ENCODE measurements at regions of chr15 and their contacts with region 1.

Region 1: DNA sequence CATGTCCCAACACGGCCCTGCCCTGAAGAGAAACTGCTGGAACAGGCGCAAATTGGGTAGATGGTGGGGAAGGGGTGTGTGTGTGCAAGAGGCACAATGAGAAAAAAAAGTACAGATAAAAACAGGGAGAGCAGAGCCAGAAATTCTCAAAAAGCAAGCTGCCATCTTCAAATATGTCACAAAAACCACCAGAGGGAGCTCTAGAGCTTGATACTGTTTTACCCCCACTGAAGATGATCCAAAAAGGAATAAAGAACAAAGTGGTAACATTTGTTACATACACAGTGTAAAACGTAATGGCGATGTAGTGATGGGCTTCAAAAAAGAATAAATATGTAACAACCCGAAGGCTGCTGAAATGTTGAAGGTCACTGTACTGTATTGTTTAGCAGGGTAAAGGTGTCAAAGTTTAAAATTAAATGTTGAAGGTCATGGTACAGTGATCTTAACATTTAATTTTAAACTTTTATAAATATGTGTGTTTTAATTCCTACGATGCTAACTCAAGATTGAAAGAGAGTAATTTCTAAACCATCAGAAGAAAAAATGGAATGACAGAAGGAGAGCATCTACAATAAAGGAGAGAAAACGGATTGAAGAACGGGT is 6.0 kb downstream of the SNRPA1 start:
- H3K4me3 ChIP-seq: no peak overlapping the region
- H3K27ac ChIP-seq: no peak overlapping the region
- H3K4me1 ChIP-seq: peaks cover 3% of the 10 kb centered on the region
- CTCF ChIP-seq: peak; percentile 50; the same call in 1 of the 2 replicates

Region 2: DNA sequence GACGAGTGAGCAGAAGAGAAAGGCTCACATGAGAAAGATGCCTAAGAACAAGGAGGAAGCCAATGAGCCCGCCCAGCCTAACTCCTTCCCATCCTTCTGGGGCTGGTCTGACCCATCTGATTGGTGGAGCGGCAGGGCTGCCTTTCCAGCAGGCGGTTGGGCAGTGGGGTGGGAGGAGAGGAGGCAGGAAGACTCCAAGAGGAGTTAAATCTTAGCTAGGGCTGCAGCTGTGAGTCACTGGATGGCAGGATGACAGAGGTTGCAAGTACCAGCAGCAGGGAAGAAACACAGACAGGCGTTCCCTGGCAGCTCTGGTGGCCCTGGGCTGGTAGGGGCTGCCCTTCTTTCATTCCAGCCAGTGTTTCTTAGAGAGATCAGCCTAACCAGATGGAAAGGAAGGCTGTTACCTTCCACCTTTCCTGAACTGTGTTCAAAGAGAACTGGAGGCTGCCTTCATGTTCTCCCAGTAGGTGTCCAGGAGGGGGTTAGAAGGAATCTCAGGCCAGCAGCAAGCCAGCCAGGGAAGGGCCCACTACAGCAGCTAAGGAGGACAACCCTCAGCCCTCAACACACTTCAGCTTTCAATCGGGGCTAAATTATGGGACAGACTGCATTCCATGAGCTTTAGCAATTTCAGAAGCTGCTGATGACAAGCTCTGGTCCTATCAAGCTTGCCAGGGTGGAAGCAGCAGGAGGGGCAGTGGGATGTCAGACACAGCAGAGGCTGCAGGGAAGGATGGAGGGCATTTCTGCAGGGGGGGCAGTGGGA is 87.4 kb before region 1 on chr15:
- CTCF ChIA-PET with region 1: no interaction called
- POLR2A ChIA-PET with region 1: no interaction called
- H3K4me3 ChIP-seq: no peak overlapping the region
- H3K27ac ChIP-seq: peak overlapping the region; percentile 43; the same call in 1 of the 2 replicates
- H3K4me1 ChIP-seq: peaks cover 22% of the 10 kb centered on the region
- CTCF ChIP-seq: no peak

Region 3: DNA sequence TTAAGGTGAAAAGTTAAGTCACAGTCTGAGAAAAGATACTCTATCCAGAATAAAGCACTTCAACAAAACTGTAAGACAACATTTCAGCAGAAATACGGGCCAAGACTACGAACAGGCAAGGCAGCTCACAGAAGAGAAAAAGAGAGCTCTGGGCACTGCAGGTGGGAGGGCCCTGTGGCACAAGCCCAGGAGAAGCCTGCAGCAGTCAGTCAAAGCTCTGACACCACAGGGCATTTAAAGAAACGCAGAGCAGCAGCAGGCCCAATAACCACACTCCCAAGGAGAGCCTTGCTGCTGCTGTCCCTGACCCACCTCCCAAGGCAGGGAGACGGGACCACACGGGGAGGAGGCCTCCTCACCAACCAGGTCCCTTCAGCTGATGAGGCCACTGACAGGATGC is 56.3 kb before region 1 on chr15:
- CTCF ChIA-PET with region 1: no interaction called
- POLR2A ChIA-PET with region 1: no interaction called
- H3K4me3 ChIP-seq: no peak overlapping the region
- H3K27ac ChIP-seq: peak overlapping the region; percentile 29; the same call in 1 of the 2 replicates
- H3K4me1 ChIP-seq: no peaks in the 10 kb centered on the region
- CTCF ChIP-seq: no peak

Region 4: DNA sequence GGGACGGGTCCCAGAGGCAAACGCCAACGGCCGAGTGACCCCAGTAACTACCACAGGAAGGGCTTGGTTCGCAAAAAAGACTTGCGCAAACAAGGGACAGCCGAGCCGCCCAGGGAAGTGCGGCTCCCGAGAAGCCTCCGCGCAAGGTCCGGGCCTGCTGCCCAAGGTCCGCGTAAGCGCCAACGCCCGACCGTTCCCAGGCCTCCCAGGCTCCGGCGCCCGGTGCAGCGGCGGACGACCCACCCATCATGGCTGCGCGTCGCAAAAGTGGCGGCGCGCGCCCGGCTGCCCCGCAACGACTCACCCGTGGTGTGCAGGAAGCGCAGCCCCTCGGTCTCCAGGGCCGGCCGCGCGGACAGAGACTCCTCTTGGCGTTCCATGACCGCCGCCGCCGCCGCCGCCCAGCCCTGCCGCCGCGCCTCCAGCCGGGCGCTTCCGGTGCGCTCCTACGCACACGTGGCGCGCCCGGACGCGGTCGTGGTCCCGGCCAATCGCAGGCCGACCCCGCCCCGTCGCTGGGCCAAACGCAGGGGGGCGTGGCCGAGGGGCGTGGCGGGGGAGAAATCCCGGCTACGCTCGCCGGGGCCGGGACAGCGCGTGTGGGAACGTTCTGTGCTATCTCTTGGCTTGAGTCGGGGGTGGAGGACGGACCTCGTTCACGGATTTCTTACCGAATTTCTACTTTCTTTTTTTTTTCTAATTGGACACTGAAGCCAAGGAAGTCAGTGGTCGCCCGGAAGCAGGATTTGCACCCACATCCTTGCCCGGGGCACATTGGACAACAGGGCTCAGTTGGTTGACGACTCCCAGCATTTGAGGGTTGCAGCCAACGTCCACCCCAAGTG is 11.8 kb before region 1 on chr15 and contains the start of gene SELENOS:
- CTCF ChIA-PET with region 1: interaction called, 28 read pairs
- POLR2A ChIA-PET with region 1: interaction called, 9 read pairs
- H3K4me3 ChIP-seq: peak within 1 kb of the TSS; percentile 60
- H3K27ac ChIP-seq: peak within 1 kb of the TSS; percentile 77
- H3K4me1 ChIP-seq: no peaks in the 10 kb centered on the region
- CTCF ChIP-seq: no peak